Activated T-helper 1 cell treated with anti-CD3 and anti-CD28 coated beads, Interleukin-12 subunit alpha, Interleukin-12 subunit beta, Interleukin-2, Interleukin-4 antibody, amounts not matched to agents 30 ng/mL and 10 ng/mL and 1 ng/mL, durations not matched to agents 14 hours and 24 hours and 36 hours (primary cell): ENCODE measurements at regions of chr14 and their contacts with region 1.

Region 1: DNA sequence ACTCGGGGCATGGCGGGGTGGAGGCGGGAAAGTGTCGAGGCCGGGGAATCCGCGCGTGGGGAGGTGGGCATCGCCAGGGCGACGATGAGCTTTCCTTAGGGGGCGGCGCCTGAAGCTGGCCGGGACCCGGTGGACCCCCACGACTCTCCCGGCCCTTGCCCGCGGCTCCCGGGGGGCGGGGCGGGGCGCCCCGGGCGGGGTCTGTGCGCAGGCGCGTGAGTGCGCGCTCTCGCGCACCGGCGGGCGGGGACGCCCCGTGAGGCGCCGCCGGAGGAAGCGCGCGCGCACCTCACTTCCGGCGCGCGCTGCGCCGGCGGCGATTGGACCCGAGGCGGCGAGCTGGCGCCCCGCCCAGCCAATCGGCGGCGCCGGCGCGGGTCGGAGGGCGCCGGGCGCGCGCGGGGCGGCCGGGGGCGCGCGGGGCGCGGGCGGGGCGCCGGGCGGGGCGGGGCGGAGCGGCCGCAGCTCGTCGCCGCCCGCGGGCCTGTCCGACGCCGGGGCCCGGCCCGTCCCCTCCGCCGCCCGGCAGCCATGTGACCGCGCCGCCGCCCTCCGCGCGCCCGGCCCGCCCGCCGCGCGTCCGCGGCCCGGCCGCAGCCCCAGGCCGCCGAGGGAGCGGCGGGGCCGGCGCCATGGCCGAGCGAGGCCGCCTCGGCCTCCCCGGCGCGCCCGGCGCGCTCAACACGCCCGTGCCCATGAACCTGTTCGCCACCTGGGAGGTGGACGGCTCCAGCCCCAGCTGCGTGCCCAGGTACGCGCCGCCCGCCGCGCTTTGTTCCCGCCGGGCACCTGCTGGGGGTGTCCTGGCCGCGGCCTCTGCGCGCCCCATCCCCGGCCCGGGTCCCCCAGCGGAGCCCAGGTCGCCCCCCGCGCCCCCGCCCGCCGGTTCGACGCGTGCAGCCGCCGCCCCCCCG is at the start of gene PACS2:
- DNase-seq: peak; percentile 78
- H3K4me3 Mint-ChIP-seq: peak within 1 kb of the TSS; percentile 90
- H3K27ac Mint-ChIP-seq: peak within 1 kb of the TSS; percentile 80
- H3K4me1 Mint-ChIP-seq: peaks cover 21% of the 10 kb centered on the region
- H3K27me3 Mint-ChIP-seq: peaks cover 11% of the 10 kb centered on the region
- total RNA-seq, gene PACS2: 28.2 and 32.3 TPM in 2 replicates

Region 2: DNA sequence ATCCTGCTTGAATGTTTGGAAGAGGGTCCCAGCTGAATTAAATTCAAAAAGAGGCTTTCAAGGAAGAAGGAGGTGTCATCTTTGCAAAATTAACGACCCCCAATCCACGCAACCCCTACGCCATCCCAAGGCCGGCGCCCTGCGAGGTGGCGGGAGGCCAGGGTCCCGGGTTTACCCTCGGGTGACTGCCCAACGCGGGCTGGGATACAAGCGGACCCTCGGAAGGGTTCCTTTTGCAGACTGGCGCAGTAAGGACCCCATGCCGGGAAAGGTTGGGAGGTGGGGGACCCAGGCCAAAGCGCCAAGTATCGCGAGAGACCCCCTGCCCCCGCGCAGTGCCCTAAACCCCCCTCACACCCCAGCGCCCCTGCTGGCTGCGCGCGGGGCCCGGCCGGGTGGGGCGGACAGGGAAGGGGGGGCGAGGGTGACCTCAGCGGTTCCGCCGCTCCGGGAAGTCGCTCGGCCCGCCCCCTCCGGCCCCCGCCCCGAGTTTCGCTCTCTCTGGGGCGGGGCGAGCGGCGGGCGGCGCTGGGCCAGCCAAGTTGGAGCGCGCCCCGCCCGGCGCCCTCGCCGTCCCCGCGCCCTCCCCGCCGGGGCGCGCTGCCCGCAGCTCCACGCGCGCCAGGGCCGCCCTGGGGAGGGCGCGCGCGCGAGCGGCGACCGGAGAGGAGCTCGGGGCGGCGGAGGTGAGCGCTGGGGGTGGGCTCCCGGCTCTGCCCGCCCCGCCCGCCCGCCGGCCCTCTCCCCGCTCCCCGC is 514.4 kb before region 1 on chr14:
- intact Hi-C with region 1: loop called (anchors 10 kb)
- DNase-seq: peak; percentile 77
- H3K4me3 Mint-ChIP-seq: peak overlapping the region; percentile 61
- H3K27ac Mint-ChIP-seq: peak overlapping the region; percentile 66
- H3K4me1 Mint-ChIP-seq: peaks cover 16% of the 10 kb centered on the region
- H3K27me3 Mint-ChIP-seq: peaks cover 10% of the 10 kb centered on the region

Region 3: GRCh38 chr14:105690692-105691091 is 376.1 kb after region 1 on chr14:
- intact Hi-C with region 1: no loop called
- DNase-seq: no peak
- H3K4me3 Mint-ChIP-seq: no peak overlapping the region
- H3K27ac Mint-ChIP-seq: no peak overlapping the region
- H3K4me1 Mint-ChIP-seq: no peaks in the 10 kb centered on the region
- H3K27me3 Mint-ChIP-seq: peaks cover 9% of the 10 kb centered on the region